Dendritic cell treated with granulocyte-macrophage colony-stimulating factor and Interleukin-4, amounts not matched to agents 40 ng/mL and 50 ng/mL, for 4 days (primary cell): ENCODE measurements at regions of chr12 and their contacts with region 1.

Region 1: DNA sequence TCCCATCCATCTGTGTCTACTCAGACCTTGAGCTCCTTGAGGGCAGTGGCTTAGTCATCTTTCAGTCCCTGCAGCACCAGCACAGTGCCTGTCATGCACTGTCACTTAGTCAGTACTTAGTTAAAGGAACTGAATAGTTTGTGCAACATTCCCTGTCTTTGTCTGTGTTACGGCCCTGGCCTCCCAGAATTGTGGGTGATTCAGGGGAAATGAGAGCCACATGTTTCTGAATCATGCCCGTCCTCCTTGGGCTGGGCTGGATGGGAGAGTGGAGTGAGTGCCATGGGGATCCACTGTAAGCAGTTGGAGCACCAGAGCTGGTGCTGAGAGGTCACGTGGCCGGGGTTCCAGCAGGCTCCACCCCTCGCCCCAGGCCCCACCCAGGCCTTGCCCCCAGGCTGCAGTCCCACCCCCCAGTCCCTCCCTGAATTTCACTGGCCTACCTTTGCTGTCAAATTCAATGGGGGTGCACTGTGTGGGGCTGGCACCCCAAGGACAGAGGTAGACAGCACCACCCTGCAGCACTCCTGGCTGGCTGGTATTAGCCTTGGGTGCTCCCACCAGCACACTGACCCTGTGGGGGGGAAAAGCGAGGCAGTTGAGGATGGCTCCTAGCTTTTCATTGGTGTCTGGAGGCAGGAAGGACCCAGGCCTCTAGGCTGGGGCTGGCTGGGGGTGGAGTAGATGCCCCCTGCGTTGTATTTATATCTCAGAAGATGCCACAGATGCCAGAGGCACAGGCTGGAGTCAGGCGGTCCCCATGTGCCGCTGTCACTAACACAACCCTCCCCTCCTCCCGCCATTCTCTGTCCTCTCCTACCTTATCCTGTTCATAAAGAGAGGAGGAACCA is 7.5 kb downstream of the ITGA5 start:
- H3K4me3 Mint-ChIP-seq: peak overlapping the region; percentile 73
- H3K27ac Mint-ChIP-seq: peak overlapping the region; percentile 90
- H3K4me1 Mint-ChIP-seq: peaks cover 95% of the 10 kb centered on the region
- H3K27me3 Mint-ChIP-seq: no peaks in the 10 kb centered on the region

Region 2: GRCh38 chr12:54497883-54498282 is 86.3 kb after region 1 on chr12:
- intact Hi-C with region 1: loop called (anchors 5 kb)
- H3K4me3 Mint-ChIP-seq: peak overlapping the region; percentile 78
- H3K27ac Mint-ChIP-seq: peak overlapping the region; percentile 91
- H3K4me1 Mint-ChIP-seq: peaks cover 49% of the 10 kb centered on the region
- H3K27me3 Mint-ChIP-seq: no peaks in the 10 kb centered on the region

Region 3: GRCh38 chr12:54549774-54550451 is 138.3 kb after region 1 on chr12:
- intact Hi-C with region 1: no loop called
- H3K4me3 Mint-ChIP-seq: peak overlapping the region; percentile 78
- H3K27ac Mint-ChIP-seq: no peak overlapping the region
- H3K4me1 Mint-ChIP-seq: peaks cover 45% of the 10 kb centered on the region
- H3K27me3 Mint-ChIP-seq: peaks cover 38% of the 10 kb centered on the region

Region 4: GRCh38 chr12:55008944-55009585 is 597.4 kb after region 1 on chr12:
- intact Hi-C with region 1: no loop called
- H3K4me3 Mint-ChIP-seq: no peak overlapping the region
- H3K27ac Mint-ChIP-seq: no peak overlapping the region
- H3K4me1 Mint-ChIP-seq: peaks cover 6% of the 10 kb centered on the region
- H3K27me3 Mint-ChIP-seq: peaks cover 37% of the 10 kb centered on the region